Activated CD8-positive, alpha-beta T cell treated with anti-CD3 and anti-CD28 coated beads for 36 hours (primary cell): ENCODE measurements at regions of chr13 and their contacts with region 1.

Region 1: GRCh38 chr13:28792992-28793391 is 27.1 kb upstream of the MTUS2 start:
- DNase-seq: no peak
- ATAC-seq: no peak
- H3K4me3 Mint-ChIP-seq: no peak overlapping the region
- H3K27ac Mint-ChIP-seq: no peak overlapping the region
- H3K4me1 Mint-ChIP-seq: no peaks in the 10 kb centered on the region
- H3K27me3 Mint-ChIP-seq: peaks cover 15% of the 10 kb centered on the region
- CTCF ChIP-seq: no peak

Region 2: GRCh38 chr13:28475916-28476725 is 316.9 kb before region 1 on chr13:
- CTCF ChIA-PET with region 1: no interaction called
- POLR2A ChIA-PET with region 1: no interaction called
- intact Hi-C with region 1: no loop called
- DNase-seq: no peak
- ATAC-seq: no peak
- H3K4me3 Mint-ChIP-seq: no peak overlapping the region
- H3K27ac Mint-ChIP-seq: no peak overlapping the region
- H3K4me1 Mint-ChIP-seq: peaks cover 5% of the 10 kb centered on the region
- H3K27me3 Mint-ChIP-seq: no peaks in the 10 kb centered on the region
- CTCF ChIP-seq: no peak

Region 3: DNA sequence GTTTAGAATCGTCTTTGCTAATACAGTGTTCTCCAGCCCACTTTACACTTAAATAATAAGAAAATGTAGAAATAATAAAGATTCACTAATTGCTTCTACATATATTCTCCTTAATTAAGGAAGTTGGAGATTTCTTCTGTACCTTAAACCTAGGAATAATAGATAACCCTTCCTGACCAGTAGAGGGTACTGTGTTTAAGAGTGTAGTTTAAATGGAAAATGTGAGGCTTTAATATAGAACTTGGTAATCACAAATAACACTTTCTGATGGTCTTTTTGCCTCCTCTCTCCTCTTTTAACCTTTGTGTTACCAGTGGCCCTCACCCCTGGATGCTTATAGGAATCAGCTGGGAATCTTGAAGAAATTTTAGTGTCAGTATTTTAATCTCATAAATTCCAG is 113.4 kb before region 1 on chr13:
- CTCF ChIA-PET with region 1: no interaction called
- POLR2A ChIA-PET with region 1: no interaction called
- intact Hi-C with region 1: loop called (anchors 10 kb)
- DNase-seq: no peak
- ATAC-seq: no peak
- H3K4me3 Mint-ChIP-seq: no peak overlapping the region
- H3K27ac Mint-ChIP-seq: peak overlapping the region; percentile 66
- H3K4me1 Mint-ChIP-seq: no peaks in the 10 kb centered on the region
- H3K27me3 Mint-ChIP-seq: no peaks in the 10 kb centered on the region
- CTCF ChIP-seq: no peak